ENCODE measurements at regions of chr16 and their contacts with region 1.

Region 1: GRCh38 chr16:55543472-55543871 is 23.0 kb upstream of the CAPNS2 start:
- DNase-seq: no peak
- ATAC-seq: no peak
- H3K4me3 Mint-ChIP-seq: no peak overlapping the region
- H3K27ac Mint-ChIP-seq: no peak overlapping the region
- H3K4me1 Mint-ChIP-seq: no peaks in the 10 kb centered on the region
- H3K27me3 Mint-ChIP-seq: no peaks in the 10 kb centered on the region

Region 2: DNA sequence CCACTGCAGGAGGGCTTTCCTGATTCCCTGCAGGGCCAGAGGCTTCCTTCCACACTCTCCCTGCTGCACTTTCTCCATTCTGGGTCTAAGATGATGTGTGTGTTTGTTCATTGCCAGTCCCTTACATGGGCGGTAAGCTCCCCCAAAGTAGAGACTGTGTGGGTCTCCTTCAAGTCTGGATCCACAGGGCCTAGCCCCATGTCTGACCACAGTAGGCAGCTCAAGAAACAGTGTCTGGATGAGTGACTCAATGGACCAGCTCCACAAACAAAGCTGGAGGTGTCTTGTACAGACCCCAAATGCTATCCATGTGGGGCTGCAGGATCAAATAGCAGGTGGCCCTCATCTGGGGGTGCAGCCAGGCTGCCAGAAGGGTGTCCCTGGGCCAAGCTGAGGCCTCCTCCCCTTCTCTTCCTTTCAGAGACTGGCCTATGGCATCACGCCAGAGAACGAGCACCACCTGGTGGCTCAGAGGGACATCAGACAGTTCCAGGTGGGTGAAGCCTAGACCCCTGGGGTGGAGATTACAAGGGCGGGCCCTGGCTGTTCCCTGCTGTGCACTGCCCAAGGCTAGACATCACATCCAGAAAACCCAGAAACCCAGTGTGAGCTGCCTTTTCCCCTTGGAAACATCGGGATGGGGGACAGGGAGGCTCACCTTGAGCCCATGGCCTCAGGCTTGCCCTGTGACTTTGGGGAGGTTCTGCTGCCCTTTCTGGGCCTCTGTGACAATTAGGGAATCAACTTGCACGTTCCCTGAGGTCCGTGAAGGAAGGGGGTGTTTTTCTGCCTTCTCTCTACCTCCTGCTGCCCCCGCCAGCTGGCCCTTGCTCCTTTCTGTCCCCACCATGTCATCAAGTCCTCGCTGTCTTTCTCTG is 158.2 kb after region 1 on chr16:
- CTCF ChIA-PET with region 1: no interaction called
- POLR2A ChIA-PET with region 1: no interaction called
- intact Hi-C with region 1: loop called in 1 of 2 experiments (anchors 2 kb)
- DNase-seq: peak; percentile 75
- ATAC-seq: peak; percentile 66
- H3K4me3 Mint-ChIP-seq: no peak overlapping the region
- H3K27ac Mint-ChIP-seq: no peak overlapping the region
- H3K4me1 Mint-ChIP-seq: peaks cover 2% of the 10 kb centered on the region
- H3K27me3 Mint-ChIP-seq: peaks cover 4% of the 10 kb centered on the region

Region 3: GRCh38 chr16:55842369-55843104 is 299.1 kb after region 1 on chr16:
- CTCF ChIA-PET with region 1: no interaction called
- POLR2A ChIA-PET with region 1: no interaction called
- intact Hi-C with region 1: loop called in 1 of 2 experiments (anchors 10 kb)
- DNase-seq: peak; percentile 27
- ATAC-seq: peak; percentile 44
- H3K4me3 Mint-ChIP-seq: no peak overlapping the region
- H3K27ac Mint-ChIP-seq: no peak overlapping the region
- H3K4me1 Mint-ChIP-seq: no peaks in the 10 kb centered on the region
- H3K27me3 Mint-ChIP-seq: peaks cover 17% of the 10 kb centered on the region

Measured in activated CD4-positive, alpha-beta T cell treated with anti-CD3 and anti-CD28 coated beads for 36 hours (primary cell).